ENCODE measurements at regions of chr10 and their contacts with region 1.

Region 1: DNA sequence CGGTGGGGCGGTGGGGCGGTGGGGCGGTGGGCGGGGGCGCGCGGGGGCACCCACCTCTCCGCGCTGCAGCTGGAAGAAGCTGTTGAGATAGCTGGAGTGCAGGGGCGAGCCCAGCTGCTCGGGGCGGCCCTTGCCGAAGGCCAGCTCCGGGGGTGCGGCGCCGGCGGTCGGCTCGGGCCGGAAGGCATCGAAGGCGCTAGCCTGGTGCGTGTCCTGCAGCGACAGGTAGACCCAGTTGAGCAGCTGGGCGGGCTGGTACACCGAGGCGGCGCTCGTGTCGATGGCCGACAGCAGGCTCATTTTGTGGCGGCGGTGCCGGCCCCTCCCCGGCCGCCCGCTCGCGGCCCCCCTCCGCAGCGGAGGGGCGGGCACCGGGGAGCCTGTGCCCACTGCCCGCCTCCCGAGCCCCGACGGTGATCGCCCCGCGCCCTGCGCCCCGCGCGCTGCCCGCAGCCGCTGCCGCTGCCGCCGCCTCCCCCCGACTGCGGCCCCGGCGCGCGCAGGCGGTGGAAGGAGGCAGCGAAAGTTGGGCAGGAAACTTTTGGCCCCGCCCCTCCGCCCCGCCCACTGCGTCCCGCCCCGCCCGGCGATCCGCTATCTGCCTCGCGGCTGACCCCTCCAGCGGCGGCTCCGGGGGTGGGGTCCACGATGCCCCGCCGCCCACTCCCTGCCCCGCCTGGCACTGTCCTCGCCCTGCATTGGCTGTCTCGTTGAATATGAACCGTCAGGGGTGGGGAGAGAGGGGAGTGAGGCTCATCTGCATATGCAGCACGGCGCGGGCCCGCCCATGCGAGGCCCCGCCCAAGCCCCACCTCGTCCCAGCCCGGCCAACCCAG is at the start of gene ZCCHC24:
- DNase-seq: peak; percentile 97
- H3K4me3 ChIP-seq: peak within 1 kb of the TSS; percentile 90
- H3K27ac ChIP-seq: peak within 1 kb of the TSS; percentile 90
- H3K27me3 ChIP-seq: no peaks in the 10 kb centered on the region
- CTCF ChIP-seq: no peak
- polyA plus RNA-seq, gene ZCCHC24: 37.4 and 46.0 TPM in 2 replicates

Region 2: DNA sequence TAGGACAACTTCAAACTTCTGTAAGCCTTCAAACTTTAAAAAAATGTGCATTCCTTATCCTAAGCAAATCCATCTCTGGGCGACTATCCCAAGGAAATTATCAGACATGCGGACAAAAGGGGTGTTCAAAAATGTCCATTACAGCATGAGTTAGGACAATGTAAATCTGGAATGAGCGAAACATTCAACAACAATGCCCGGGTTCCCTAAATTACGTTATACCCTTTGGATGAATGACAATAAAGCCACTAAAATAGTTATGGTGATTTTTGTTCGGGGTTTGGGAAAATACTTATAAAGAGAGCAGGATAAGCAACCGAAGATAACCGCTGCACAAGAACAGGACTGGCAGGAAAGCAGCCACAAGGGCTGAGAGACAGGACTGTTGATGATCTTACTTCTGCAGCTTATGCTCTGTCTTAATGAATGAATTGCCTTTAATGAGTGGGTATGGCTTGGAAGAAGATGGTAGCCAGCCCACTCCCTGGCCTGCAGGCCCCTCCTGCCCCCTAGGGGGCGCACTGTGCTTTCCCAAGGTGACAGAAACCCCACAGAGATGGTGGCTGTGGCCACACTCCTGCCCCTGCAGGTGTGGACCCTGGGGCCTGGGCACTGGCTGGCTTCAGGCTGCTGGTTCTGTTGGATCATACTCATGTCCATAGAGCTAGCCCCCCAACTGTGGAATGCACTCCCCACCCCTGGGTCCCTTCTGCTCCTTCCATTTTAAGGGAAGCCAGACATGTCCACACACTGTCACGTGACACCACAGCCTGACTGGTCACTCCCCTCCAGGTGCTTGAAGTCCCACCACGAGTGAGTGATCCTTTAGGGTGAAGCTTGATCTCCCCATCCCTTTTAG is 45.0 kb before region 1 on chr10:
- CTCF ChIA-PET with region 1: interaction called, 3 read pairs
- POLR2A ChIA-PET with region 1: interaction called, 21 read pairs
- DNase-seq: no peak
- H3K4me3 ChIP-seq: no peak overlapping the region
- H3K27ac ChIP-seq: peak overlapping the region; percentile 100
- H3K27me3 ChIP-seq: no peaks in the 10 kb centered on the region
- CTCF ChIP-seq: peak; percentile 71

Region 3: GRCh38 chr10:79422178-79422892 is 23.0 kb before region 1 on chr10:
- CTCF ChIA-PET with region 1: no interaction called
- POLR2A ChIA-PET with region 1: interaction called, 16 read pairs
- DNase-seq: peak; percentile 91
- H3K4me3 ChIP-seq: peak overlapping the region; percentile 32; the same call in 1 of the 2 replicates
- H3K27ac ChIP-seq: peak overlapping the region; percentile 89
- H3K27me3 ChIP-seq: no peaks in the 10 kb centered on the region
- CTCF ChIP-seq: no peak

Region 4: DNA sequence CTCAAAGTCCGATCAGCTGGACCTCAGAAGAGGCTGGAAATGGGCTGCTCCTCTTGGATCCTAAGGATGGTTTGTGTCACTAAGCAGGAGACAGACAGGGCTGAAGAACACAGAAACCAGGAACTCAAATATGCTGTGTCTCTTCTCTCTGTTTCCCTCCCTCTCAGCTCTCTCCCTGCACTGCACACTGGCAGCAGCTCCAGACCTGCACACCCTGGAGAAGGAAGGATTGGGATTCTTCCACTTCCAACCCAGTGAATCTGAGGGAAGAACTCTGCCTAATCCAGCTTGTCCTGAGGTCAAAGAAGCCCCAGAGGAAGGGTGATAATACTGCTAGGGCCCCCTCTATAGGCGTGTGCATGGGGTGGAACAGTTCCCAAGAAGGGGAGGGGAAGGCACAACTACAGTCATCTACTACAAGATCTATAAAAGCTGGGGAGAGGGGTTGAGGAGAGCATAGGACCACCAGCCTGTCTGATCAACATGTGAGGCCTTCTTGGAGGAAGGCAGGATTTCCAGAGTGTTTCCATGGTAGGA is 22.7 kb after region 1 on chr10:
- CTCF ChIA-PET with region 1: interaction called, 8 read pairs
- POLR2A ChIA-PET with region 1: interaction called, 12 read pairs
- DNase-seq: no peak
- H3K4me3 ChIP-seq: no peak overlapping the region
- H3K27ac ChIP-seq: peak overlapping the region; percentile 49
- H3K27me3 ChIP-seq: no peaks in the 10 kb centered on the region
- CTCF ChIP-seq: no peak

Region 5: GRCh38 chr10:79487296-79488194 is 42.2 kb after region 1 on chr10:
- CTCF ChIA-PET with region 1: no interaction called
- POLR2A ChIA-PET with region 1: interaction called, 12 read pairs
- DNase-seq: no peak
- H3K4me3 ChIP-seq: no peak overlapping the region
- H3K27ac ChIP-seq: peak overlapping the region; percentile 88
- H3K27me3 ChIP-seq: no peaks in the 10 kb centered on the region
- CTCF ChIP-seq: peak; percentile 63

Region 6: DNA sequence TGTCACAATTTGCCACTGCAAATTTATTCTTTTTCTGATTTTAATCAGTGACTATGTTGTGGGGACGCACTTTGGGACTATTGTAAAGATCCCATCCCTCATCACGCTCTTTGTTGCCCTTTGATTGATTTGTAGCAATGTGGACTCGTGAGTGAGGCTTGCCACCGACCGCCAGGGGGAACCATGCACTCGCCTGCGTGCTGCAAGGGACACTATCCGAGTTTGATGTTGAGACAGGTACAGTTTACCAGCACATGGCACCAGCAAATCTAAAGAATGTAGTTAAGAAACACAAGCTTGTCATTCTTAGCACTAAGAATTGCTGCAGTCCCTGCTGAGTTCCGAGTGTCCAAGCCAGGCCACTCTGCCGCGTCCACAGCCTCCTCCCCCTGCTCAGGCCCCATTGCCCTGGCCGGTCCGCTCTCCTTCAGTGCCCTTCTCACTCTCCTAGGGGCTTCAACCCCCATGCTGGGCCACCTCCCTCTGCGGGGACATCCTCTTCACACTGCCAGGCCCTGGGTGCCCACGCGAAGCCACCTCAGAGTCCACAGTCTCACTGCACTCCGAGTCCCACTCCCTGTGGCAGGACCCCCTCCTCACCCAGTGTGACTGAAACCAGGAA is 116.9 kb after region 1 on chr10:
- CTCF ChIA-PET with region 1: no interaction called
- POLR2A ChIA-PET with region 1: no interaction called
- DNase-seq: peak; percentile 13
- H3K4me3 ChIP-seq: no peak overlapping the region
- H3K27ac ChIP-seq: no peak overlapping the region
- H3K27me3 ChIP-seq: peaks cover 14% of the 10 kb centered on the region
- CTCF ChIP-seq: peak; percentile 95

Region 7: GRCh38 chr10:79588800-79589199 is 143.4 kb after region 1 on chr10:
- CTCF ChIA-PET with region 1: no interaction called
- POLR2A ChIA-PET with region 1: no interaction called
- DNase-seq: no peak
- H3K4me3 ChIP-seq: no peak overlapping the region
- H3K27ac ChIP-seq: no peak overlapping the region
- H3K27me3 ChIP-seq: peaks cover 24% of the 10 kb centered on the region
- CTCF ChIP-seq: no peak

Measured in AG04450 (cell line).